Spleen (tissue), 13 donors: ENCODE measurements at regions of chr5 and their contacts with region 1.

Region 1: GRCh38 chr5:134527146-134527960 is 1.9 kb downstream of the JADE2 start:
- DNase-seq: peak; percentile 96
- H3K4me3 ChIP-seq: peak overlapping the region; percentile 75 to 100 (median 100)
- H3K27ac ChIP-seq: peak overlapping the region; percentile 96 to 100 (median 98)
- H3K4me1 ChIP-seq: peaks cover 27 to 77% (median 57%) of the 10 kb centered on the region in 6 donors
- H3K27me3 ChIP-seq: no peaks in the 10 kb centered on the region
- CTCF ChIP-seq: peak; percentile 78 to 96 (median 93)
- POLR2A ChIP-seq: no peak

Region 2: GRCh38 chr5:134465816-134466240 is 61.5 kb before region 1 on chr5:
- intact Hi-C with region 1: loop called (anchors 5 kb)
- DNase-seq: peak; percentile 94
- H3K4me3 ChIP-seq: peak overlapping the region; percentile 40 to 75 (median 50)
- H3K27ac ChIP-seq: peak overlapping the region; percentile 90 to 98 (median 96)
- H3K4me1 ChIP-seq: peaks cover 4 to 46% (median 40%) of the 10 kb centered on the region in 6 donors
- H3K27me3 ChIP-seq: no peaks in the 10 kb centered on the region
- CTCF ChIP-seq: peak in 3 of 11 experiments; percentile 8 to 14 (median 13)
- POLR2A ChIP-seq: peak in 2 of 3 donors; percentile 35 to 77

Region 3: GRCh38 chr5:134577796-134578363 is 50.5 kb after region 1 on chr5:
- intact Hi-C with region 1: loop called (anchors 10 kb)
- DNase-seq: peak; percentile 93
- H3K4me3 ChIP-seq: no peak overlapping the region
- H3K27ac ChIP-seq: peak overlapping the region in 2 of 8 donors; percentile 21 to 47
- H3K4me1 ChIP-seq: peaks cover 12 to 60% (median 22%) of the 10 kb centered on the region in 6 donors
- H3K27me3 ChIP-seq: no peaks in the 10 kb centered on the region
- CTCF ChIP-seq: peak; percentile 45 to 90 (median 82)
- POLR2A ChIP-seq: no peak